Activated CD8-positive, alpha-beta T cell treated with anti-CD3 and anti-CD28 coated beads, Interleukin-2, amount 10 ng/mL, durations not matched to agents 7 days and 5 days (primary cell): ENCODE measurements at regions of chr19 and their contacts with region 1.

Region 1: DNA sequence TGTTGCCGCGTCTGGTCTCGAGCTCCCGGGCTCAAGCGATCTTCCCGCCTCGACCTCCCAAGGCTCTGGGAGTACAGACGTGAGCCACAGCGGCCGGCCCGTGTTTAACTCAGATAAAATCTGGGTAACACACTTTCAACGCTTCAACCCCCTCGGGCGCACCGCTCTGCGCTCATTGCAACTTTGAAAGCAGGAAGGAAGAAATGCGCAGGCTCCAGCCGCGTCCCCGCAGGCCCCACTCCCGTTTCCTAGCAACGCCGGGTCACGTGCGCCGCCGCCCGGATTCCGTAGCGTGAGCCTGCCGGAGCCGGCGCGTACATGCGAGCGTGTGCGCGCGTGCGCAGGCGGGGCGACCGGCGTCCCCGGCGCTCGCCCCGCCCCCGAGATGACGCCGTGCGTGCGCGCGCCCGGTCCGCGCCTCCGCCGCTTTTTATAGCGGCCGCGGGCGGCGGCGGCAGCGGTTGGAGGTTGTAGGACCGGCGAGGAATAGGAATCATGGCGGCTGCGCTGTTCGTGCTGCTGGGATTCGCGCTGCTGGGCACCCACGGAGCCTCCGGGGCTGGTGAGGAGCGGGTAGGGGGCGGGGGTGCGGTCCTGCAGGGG is at the start of gene BSG:
- DNase-seq: peak; percentile 99
- ATAC-seq: peak; percentile 80
- H3K4me3 Mint-ChIP-seq: peak within 1 kb of the TSS; percentile 88
- H3K27ac Mint-ChIP-seq: peak within 1 kb of the TSS; percentile 97
- H3K4me1 Mint-ChIP-seq: peaks cover 42% of the 10 kb centered on the region
- H3K27me3 Mint-ChIP-seq: no peaks in the 10 kb centered on the region
- total RNA-seq, gene BSG: 207 to 217 TPM

Region 2: GRCh38 chr19:408898-409515 is 163.2 kb before region 1 on chr19 and contains the start of gene C2CD4C:
- CTCF ChIA-PET with region 1: no interaction called
- POLR2A ChIA-PET with region 1: no interaction called
- DNase-seq: no peak
- ATAC-seq: peak; percentile 42
- H3K4me3 Mint-ChIP-seq: peak within 1 kb of the TSS; percentile 36
- H3K27ac Mint-ChIP-seq: no peak within 1 kb of the TSS
- H3K4me1 Mint-ChIP-seq: peaks cover 4% of the 10 kb centered on the region
- H3K27me3 Mint-ChIP-seq: peaks cover 7% of the 10 kb centered on the region
- total RNA-seq, gene C2CD4C: not detected

Region 3: DNA sequence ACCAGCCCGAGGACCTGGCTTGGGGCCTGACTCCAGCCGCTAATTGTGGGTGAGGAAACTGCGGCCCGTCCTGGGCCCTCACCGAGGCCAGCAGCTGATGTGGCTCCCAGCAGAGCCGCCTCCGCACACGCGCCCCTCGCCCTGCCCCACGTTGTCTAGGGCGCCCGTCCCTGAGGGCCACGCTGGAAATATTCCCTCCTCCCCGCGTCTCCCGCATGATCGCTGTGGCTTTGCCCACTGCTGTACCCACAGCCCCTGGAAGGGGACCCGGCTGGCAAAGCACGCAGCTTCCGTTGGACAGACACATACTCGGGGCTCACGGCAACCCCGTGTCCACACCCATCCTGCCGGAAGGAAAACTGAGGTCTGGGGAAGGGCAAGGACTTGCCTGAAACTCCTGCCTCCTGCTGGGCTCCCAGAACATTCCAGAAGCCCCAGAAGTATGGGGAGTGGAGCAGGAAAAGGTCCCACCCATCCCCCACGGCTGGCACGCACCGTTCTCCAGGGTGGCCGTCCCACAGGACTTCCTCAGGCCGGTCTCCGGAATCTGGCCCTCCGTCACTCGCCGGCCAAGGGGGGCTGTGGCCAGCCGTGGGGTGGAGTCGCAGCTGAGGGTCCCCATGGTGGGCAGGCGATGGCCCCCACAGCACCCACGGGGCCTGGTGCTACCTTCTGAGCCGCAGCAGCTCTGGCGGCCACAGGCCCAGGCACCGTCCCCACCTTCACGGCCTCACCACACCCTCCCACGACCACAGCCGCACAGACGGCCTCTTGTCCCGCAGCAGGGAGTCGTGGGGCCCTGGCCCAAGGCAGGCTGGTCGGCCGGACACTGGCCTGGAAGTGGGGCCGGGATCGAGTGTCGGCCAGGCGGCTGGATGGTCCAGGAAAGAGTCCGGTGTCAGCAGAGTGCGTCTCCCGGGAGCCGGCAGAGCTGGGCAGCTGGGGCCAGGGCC is 97.8 kb before region 1 on chr19:
- CTCF ChIA-PET with region 1: no interaction called
- POLR2A ChIA-PET with region 1: no interaction called
- DNase-seq: no peak
- ATAC-seq: no peak
- H3K4me3 Mint-ChIP-seq: no peak overlapping the region
- H3K27ac Mint-ChIP-seq: no peak overlapping the region
- H3K4me1 Mint-ChIP-seq: no peaks in the 10 kb centered on the region
- H3K27me3 Mint-ChIP-seq: no peaks in the 10 kb centered on the region

Region 4: DNA sequence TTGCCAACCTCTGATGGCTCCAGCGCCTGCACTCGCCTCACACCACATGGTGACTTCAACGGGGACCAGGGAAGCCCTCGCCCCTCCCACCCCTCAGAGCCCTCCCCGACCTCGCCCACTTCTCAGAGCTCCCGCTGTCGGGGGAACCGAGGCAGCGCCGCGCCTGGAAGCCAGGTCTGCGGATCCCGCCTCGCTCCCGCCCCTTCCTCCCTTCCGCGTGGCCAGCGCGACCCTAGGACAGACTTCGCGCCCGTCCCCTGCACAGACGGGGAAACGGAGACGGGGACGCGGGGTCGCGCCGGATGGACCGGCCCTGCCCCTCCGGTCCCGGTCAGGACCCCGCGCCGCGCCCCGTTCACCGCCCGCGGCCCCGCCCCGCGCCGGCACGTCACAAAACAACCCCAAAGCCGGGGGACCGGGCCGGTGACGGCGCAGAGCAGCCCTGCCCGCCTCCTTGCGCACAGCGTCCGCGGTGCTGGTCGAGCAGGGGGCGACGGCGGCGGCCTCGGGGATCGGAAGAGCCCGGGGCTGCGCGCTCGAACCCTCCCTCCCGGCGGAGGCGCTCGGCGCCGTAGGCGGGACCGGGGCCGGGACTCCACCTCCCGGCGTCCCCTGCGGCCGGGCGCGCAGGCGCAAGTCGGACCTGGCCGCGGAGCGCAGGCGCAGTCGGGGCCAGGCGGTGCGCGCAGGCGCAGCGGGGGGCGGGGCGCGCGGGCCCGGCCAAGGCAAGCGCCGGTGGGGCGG is 41.1 kb before region 1 on chr19:
- CTCF ChIA-PET with region 1: no interaction called
- POLR2A ChIA-PET with region 1: interaction called, 14 read pairs
- DNase-seq: peak; percentile 88
- ATAC-seq: peak; percentile 80
- H3K4me3 Mint-ChIP-seq: peak overlapping the region; percentile 78
- H3K27ac Mint-ChIP-seq: peak overlapping the region; percentile 89
- H3K4me1 Mint-ChIP-seq: peaks cover 22% of the 10 kb centered on the region
- H3K27me3 Mint-ChIP-seq: peaks cover 2% of the 10 kb centered on the region

Region 5: DNA sequence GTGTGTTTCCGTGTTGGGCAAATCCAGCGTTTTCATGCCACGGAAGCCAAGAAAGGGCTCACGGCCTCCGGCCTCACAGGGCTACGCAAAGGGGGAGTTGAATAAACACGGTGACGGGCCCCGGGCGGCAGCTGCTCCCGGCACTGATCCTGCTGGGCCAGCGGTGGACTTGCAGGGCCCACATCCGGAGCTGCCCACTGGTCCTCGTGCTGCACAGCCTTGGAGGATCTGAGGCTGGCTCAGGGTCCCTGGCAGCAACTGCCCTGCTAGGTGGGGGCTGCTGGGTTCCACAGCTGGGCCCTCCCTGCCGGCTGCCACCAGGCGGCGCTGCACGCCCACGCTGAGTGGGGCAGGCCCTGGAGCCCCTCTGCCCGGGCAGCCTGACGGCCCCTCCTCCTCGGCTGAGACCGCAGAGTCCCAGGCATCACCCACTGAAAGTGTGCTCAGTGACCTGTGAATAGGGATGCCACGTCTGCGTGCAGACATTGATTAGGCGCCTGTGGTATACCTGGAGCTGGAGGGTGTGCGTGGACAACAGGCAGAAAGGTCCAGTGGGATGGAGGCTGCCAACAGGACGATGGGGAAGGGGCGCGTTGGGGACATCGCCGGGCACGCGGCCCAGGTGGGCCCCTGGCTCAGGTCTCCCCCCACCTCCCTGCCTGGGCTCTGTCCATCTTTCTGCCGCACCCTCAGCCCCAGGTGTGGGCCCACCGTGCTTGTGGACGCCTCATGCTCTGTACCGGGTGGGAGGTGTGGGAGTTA is 12.2 kb after region 1 on chr19:
- CTCF ChIA-PET with region 1: interaction called, 12 read pairs
- POLR2A ChIA-PET with region 1: no interaction called
- DNase-seq: peak; percentile 69
- ATAC-seq: peak; percentile 67
- H3K4me3 Mint-ChIP-seq: no peak overlapping the region
- H3K27ac Mint-ChIP-seq: no peak overlapping the region
- H3K4me1 Mint-ChIP-seq: peaks cover 4% of the 10 kb centered on the region
- H3K27me3 Mint-ChIP-seq: peaks cover 13% of the 10 kb centered on the region